ENCODE measurements at regions of chr12 and their contacts with region 1.

Region 1: DNA sequence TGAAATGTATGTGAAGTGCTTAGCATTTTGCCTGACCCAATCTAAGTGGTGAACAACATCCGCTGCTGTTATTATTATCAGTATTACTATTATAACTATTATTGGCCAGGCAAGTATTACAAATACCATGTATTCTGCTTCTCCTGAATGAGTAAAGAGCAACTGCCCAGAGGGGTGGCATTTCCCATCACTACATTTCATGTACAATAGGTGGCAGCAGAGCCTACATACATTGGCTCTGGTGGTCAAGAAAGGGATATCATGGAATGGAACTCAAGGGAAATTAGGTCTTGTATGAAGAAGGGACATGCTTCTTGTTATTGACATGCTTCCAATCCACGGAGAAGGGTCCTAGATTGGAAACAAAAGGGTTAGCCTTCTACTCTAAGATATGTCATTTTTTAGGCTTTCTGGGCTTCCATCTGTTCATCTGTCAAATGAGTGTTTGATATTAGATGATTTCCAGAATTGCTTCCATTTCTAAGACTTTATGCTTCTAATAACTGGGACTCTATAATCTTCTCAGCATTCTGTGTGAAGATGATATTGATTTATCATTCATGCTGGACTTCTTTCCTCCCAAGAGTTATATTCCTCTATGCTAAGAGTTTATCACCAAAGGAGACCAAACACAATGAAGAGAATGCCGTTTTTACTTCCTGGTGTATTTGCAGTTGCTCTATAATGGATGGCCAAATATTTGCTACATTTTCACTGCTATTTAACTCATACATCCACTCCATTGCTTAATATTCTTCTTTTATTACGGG is 239.1 kb downstream of the SSPN start:
- DNase-seq: no peak
- ATAC-seq: peak; percentile 58 to 76 (median 64)
- H3K4me3 ChIP-seq: no peak overlapping the region
- H3K27ac ChIP-seq: no peak overlapping the region
- H3K4me1 ChIP-seq: no peaks in the 10 kb centered on the region
- H3K27me3 ChIP-seq: no peaks in the 10 kb centered on the region
- CTCF ChIP-seq: peak; percentile 49 to 71 (median 62)
- POLR2A ChIP-seq: no peak

Region 2: DNA sequence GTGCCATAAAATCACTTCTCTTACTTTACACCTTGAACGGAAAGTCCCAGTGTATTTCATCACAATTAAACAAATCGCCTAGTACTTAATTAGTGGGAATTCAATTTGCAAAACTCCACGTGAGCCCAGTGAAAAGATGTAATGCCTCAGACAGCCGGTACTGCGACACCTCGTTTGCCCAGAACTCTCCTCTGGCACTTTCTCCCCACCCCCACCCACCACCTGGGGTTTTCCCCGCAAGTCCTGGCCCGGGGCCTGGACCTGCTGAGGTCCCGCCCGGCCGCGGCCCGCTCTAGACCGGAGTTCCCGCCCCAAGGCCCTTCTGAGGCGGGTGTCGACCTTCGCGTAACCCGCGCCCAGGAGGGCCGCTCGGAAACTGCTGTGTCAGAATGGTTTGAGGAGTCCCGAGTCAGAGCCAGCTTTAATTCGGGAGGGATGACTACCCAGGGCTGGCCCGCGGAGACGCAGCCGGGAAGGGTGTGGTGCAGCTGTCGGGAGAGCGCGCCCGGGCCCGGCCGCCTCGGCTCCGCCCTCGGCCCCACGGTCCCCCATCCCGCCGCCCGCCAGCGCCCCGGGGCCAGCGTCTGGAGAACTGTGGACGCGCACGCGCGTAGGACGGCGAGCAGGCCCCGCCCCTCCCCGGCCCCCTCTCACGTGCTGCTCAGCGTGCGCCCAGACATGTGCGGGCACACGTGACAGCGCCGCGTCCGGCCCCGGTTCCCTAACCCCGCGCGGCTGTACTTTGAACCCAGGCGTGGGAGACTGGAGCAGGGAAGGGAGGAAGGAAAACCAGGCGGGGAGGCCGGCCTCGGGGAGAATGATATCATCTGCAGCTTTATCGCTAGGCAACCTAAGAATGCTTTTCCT is 320.4 kb before region 1 on chr12:
- intact Hi-C with region 1: loop called in 3 of 10 experiments (anchors 10 kb)
- DNase-seq: peak; percentile 95 to 96 (median 96)
- ATAC-seq: peak; percentile 83 to 97 (median 92)
- H3K4me3 ChIP-seq: peak overlapping the region; percentile 3 to 65 (median 54)
- H3K27ac ChIP-seq: peak overlapping the region; percentile 88 to 98 (median 93)
- H3K4me1 ChIP-seq: peaks cover 0 to 56% (median 36%) of the 10 kb centered on the region in 12 donors
- H3K27me3 ChIP-seq: no peaks in the 10 kb centered on the region
- CTCF ChIP-seq: peak in 4 of 12 donors; percentile 22 to 43 (median 34)
- POLR2A ChIP-seq: peak in 1 of 2 donors; percentile 89

Region 3: GRCh38 chr12:26378711-26379110 is 55.8 kb before region 1 on chr12:
- intact Hi-C with region 1: no loop called
- DNase-seq: peak in 1 of 5 donors; percentile 29
- ATAC-seq: peak in 3 of 4 donors; percentile 78 to 92 (median 81)
- H3K4me3 ChIP-seq: no peak overlapping the region
- H3K27ac ChIP-seq: peak overlapping the region in 1 of 12 donors; percentile 33
- H3K4me1 ChIP-seq: peaks cover 0 to 20% (median 11%) of the 10 kb centered on the region in 12 donors
- H3K27me3 ChIP-seq: no peaks in the 10 kb centered on the region
- CTCF ChIP-seq: no peak
- POLR2A ChIP-seq: no peak

Region 4: DNA sequence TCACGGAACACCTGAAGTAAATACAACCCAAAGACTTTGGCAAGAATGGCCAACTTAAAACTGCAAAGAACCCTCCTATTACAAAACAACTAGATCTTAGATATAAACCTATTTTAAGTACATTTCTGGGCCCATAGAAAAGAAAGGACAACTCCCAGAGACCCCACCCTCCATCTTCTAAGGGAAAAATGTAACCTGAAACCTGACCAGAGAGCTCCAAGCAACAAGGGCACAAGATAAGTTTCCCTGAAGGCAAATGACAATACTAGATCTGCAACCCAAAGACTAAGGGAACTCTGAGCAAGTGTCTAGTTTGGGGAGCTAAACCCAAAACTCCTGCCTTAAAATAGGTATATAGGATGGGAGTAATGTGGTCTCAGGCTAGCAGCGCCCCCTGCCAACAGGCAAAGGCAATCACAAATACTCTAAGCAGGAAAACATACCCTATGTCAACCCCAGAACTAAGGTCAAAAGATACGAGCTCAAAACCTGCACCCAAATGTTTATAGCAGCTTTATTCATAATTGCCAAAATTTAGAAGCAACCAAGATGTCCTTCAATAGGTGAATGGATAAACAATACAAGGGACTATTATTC is 179.6 kb after region 1 on chr12:
- intact Hi-C with region 1: loop called in 6 of 10 experiments (anchors 5 to 10 kb)
- DNase-seq: peak in 1 of 5 donors; percentile 25
- ATAC-seq: peak in 3 of 4 donors; percentile 44 to 59 (median 51)
- H3K4me3 ChIP-seq: no peak overlapping the region
- H3K27ac ChIP-seq: no peak overlapping the region
- H3K4me1 ChIP-seq: peaks cover 0 to 4% (median 0%) of the 10 kb centered on the region in 12 donors
- H3K27me3 ChIP-seq: no peaks in the 10 kb centered on the region
- CTCF ChIP-seq: peak; percentile 21 to 69 (median 50)
- POLR2A ChIP-seq: no peak

Region 5: DNA sequence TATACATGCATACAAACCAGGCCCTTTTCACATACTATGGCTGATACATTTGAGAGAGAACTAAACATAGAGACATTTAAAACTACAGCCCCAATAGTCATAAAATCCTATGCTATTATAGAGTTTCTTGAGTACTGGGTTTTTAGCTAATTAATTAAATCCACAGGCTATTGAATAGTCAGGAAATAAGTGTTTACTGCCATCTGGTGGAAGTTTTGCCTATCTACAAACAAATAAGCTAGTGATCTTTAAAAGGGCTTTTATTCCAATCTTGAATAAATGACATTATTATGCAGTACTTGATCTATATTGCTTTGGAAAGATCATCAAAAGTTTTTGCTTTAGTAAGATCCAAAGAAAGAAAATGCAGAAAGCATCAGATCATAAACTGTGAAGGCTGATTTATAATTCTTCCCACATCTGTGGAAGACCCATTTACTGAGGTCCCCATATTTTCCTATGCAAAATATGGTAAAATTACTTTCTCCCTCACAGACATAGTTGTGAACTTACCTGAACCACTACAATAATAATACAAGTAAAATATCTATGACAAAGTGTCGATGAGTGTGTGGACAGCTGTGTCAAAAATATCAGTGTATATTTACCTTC is 267.2 kb after region 1 on chr12:
- intact Hi-C with region 1: loop called in 1 of 10 experiments (anchors 5 kb)
- DNase-seq: no peak
- ATAC-seq: no peak
- H3K4me3 ChIP-seq: no peak overlapping the region
- H3K27ac ChIP-seq: no peak overlapping the region
- H3K4me1 ChIP-seq: peaks cover 0 to 31% (median 12%) of the 10 kb centered on the region in 12 donors
- H3K27me3 ChIP-seq: no peaks in the 10 kb centered on the region
- CTCF ChIP-seq: peak; percentile 50 to 74 (median 64)
- POLR2A ChIP-seq: no peak

Measured in heart left ventricle (tissue), 16 donors.